ENCODE measurements at regions of chr10 and their contacts with region 1.

Region 1: DNA sequence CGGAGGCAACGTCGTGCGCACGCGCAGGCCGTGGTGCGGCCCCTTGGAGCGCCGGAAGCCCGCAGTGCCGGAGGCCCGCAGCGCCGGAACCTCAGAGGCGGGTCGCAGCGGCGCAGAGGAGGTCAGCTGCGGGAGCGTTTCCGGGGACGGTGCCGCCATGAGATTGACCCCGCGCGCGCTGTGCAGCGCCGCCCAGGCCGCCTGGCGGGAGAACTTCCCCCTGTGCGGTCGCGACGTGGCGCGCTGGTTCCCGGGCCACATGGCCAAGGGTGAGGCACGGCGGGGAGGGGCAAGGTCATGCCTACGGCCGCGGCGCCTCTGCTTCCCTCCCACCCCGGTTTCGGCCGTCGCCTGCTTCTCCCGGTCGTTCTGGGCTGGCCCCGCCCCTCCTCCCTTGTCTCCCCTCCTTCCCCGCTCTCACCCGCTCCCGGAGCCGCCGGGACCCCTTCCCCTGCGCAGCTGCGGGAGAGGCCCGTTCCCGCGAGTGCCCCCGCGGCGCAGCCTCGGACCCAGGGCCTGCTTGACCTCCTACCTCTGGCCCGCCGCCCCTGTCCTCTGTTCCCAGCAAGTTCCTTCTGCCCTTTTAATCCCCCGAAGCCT is at the start of gene MTG1:
- DNase-seq: peak; percentile 65
- ATAC-seq: peak; percentile 85
- H3K4me3 ChIP-seq: peak within 1 kb of the TSS; percentile 80
- H3K27ac ChIP-seq: peak within 1 kb of the TSS; percentile 95
- H3K4me1 ChIP-seq: peaks cover 39% of the 10 kb centered on the region
- H3K27me3 ChIP-seq: no peaks in the 10 kb centered on the region
- CTCF ChIP-seq: peak in 1 of 3 experiments; percentile 16; a peak in 1 of 6 replicates
- EP300 ChIP-seq: peak; percentile 13 to 33; a peak in 1 of 4 replicates
- POLR2A ChIP-seq: peak; percentile 91
- RAD21 ChIP-seq: no peak
- polyA plus RNA-seq, gene MTG1: 6.2 to 9.2 TPM

Region 2: DNA sequence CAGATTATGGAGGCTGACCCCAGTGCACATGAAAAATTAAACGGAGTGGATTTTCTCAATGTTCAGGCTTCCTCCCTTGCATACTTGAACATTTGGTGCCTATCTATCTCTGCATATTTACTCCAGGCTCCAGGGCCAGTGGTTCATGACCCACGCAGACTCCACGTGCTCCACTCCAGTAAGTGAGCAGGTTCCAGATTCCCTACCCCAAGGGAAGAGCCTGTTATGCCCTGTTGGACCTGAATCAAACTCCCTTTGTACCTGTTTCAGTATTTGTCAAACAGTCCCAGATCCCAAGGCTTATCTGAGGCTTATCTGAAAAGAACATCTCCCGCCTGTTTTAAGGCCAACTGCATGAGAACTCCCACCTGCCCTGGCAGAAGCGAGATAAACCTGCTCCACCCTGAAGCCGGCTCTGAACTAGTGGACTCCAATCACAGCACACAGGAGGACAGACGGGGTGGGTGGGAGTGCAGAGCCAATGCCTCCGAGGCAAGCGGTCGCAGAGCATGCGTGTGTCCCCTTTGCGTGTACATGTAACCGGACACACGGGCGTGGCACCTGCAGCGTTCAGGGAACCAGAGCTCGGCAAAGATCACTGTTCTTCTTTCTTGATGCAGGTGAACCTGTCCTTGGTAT is 34.1 kb before region 1 on chr10:
- CTCF ChIA-PET with region 1: no interaction called
- POLR2A ChIA-PET with region 1: interaction called, 4 read pairs
- RAD21 ChIA-PET with region 1: interaction called, 7 read pairs
- SMC1A ChIA-PET with region 1: interaction called, 16 read pairs
- in situ Hi-C with region 1: no loop called
- intact Hi-C with region 1: no loop called
- DNase-seq: no peak
- ATAC-seq: no peak
- H3K4me3 ChIP-seq: no peak overlapping the region
- H3K27ac ChIP-seq: no peak overlapping the region
- H3K4me1 ChIP-seq: peaks cover 18% of the 10 kb centered on the region
- H3K27me3 ChIP-seq: no peaks in the 10 kb centered on the region
- CTCF ChIP-seq: no peak
- EP300 ChIP-seq: no peak
- POLR2A ChIP-seq: no peak
- RAD21 ChIP-seq: no peak

Region 3: DNA sequence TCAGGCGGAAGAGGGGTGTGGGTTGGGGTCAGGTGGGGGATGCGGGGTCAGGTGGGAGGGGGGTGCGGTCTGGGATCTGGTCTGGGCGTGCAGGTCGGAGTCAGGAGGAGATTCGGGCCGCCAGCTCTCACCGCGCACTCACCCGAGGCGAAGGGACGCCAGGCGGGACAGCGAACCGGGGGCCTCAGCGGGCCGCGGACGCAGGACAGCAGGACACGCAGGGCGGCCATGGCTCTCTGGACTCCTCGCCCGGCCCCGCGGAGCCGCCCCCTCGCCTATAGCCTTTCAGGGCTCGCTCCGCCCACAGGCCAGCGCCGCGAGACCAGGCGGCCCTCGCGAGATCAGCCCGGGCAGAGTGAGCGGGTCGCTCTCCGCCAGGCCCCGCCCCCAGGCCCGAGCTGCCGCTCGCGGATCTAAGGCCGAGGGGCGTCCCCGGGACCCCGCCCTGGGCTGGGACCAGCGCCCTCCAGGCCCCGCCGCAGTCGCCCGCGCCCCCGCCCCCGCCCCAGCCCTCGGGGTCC is 21.0 kb before region 1 on chr10 and contains the start of gene ECHS1:
- CTCF ChIA-PET with region 1: interaction called, 4 read pairs
- POLR2A ChIA-PET with region 1: interaction called, 31 read pairs
- RAD21 ChIA-PET with region 1: interaction called, 13 read pairs
- SMC1A ChIA-PET with region 1: interaction called, 11 read pairs
- in situ Hi-C with region 1: no loop called
- intact Hi-C with region 1: loop called (anchors 1 kb)
- DNase-seq: peak; percentile 58
- ATAC-seq: peak; percentile 100
- H3K4me3 ChIP-seq: peak within 1 kb of the TSS; percentile 63
- H3K27ac ChIP-seq: peak within 1 kb of the TSS; percentile 58
- H3K4me1 ChIP-seq: peaks cover 8% of the 10 kb centered on the region; the same call in 1 of the 2 replicates
- H3K27me3 ChIP-seq: no peaks in the 10 kb centered on the region
- CTCF ChIP-seq: no peak
- EP300 ChIP-seq: no peak
- POLR2A ChIP-seq: peak; percentile 97
- RAD21 ChIP-seq: no peak
- polyA plus RNA-seq, gene ECHS1: 55.3 to 67.7 TPM

Region 4: GRCh38 chr10:133378251-133379096 is 15.7 kb before region 1 on chr10:
- CTCF ChIA-PET with region 1: interaction called, 4 read pairs
- POLR2A ChIA-PET with region 1: interaction called, 31 read pairs
- RAD21 ChIA-PET with region 1: interaction called, 13 read pairs
- SMC1A ChIA-PET with region 1: interaction called, 11 read pairs
- in situ Hi-C with region 1: no loop called
- intact Hi-C with region 1: loop called (anchors 1 kb)
- DNase-seq: no peak
- ATAC-seq: peak; percentile 73
- H3K4me3 ChIP-seq: peak overlapping the region; percentile 69
- H3K27ac ChIP-seq: no peak overlapping the region
- H3K4me1 ChIP-seq: peaks cover 13% of the 10 kb centered on the region
- H3K27me3 ChIP-seq: no peaks in the 10 kb centered on the region
- CTCF ChIP-seq: no peak
- EP300 ChIP-seq: no peak
- POLR2A ChIP-seq: peak; percentile 43; the same call in 1 of the 2 replicates
- RAD21 ChIP-seq: no peak

Region 5: DNA sequence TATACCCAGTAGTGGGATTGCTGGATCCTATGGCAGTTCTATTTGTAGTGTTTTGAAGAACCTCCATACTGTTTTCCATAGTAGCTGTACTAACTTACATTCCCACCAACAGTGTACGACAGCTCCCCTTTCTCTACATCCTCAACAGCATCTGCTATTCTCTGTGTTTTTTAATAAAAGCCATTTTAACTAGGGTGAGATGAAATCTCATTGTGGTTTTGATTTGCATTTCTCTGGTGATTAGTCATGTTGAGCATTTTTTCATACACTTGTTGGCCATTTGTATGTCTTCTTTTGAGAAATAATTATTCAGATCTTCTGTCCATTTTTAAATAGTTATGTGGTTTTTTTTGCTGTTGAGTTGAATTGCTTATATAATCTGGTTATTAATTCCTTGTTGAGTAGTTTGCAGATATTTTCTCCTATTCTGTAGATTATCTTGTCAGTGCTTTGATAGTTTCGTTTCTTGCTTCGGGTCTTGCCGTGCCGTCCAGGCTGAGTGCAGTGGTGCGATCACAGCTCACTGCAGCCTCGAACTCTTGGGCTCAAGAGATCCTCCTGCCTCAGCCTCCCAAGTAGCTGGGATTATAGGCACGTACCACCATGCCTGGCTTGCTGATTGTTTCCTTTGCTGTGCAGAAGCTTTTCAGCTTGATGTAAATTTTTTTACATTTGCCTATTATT is 11.8 kb after region 1 on chr10:
- CTCF ChIA-PET with region 1: no interaction called
- POLR2A ChIA-PET with region 1: interaction called, 17 read pairs
- RAD21 ChIA-PET with region 1: interaction called, 16 read pairs
- SMC1A ChIA-PET with region 1: interaction called, 21 read pairs
- in situ Hi-C with region 1: no loop called
- intact Hi-C with region 1: loop called (anchors 2 kb)
- DNase-seq: no peak
- ATAC-seq: peak; percentile 68
- H3K4me3 ChIP-seq: 0 out of 2 replicates have a peak overlapping the region, but pooled peaks have one; percentile 25
- H3K27ac ChIP-seq: peak overlapping the region; percentile 64
- H3K4me1 ChIP-seq: peaks cover 24% of the 10 kb centered on the region
- H3K27me3 ChIP-seq: no peaks in the 10 kb centered on the region
- CTCF ChIP-seq: no peak
- EP300 ChIP-seq: no peak
- POLR2A ChIP-seq: no peak
- RAD21 ChIP-seq: no peak

Region 6: GRCh38 chr10:133616371-133617130 is 222.4 kb after region 1 on chr10:
- CTCF ChIA-PET with region 1: no interaction called
- POLR2A ChIA-PET with region 1: no interaction called
- RAD21 ChIA-PET with region 1: no interaction called
- SMC1A ChIA-PET with region 1: no interaction called
- in situ Hi-C with region 1: no loop called
- intact Hi-C with region 1: no loop called
- DNase-seq: no peak
- ATAC-seq: no peak
- H3K4me3 ChIP-seq: no peak overlapping the region
- H3K27ac ChIP-seq: no peak overlapping the region
- H3K4me1 ChIP-seq: no peaks in the 10 kb centered on the region
- H3K27me3 ChIP-seq: no peaks in the 10 kb centered on the region; a peak in 1 of 4 replicates
- CTCF ChIP-seq: no peak
- EP300 ChIP-seq: no peak
- POLR2A ChIP-seq: no peak
- RAD21 ChIP-seq: no peak